ENCODE measurements at regions of chr18 and their contacts with region 1.

Region 1: DNA sequence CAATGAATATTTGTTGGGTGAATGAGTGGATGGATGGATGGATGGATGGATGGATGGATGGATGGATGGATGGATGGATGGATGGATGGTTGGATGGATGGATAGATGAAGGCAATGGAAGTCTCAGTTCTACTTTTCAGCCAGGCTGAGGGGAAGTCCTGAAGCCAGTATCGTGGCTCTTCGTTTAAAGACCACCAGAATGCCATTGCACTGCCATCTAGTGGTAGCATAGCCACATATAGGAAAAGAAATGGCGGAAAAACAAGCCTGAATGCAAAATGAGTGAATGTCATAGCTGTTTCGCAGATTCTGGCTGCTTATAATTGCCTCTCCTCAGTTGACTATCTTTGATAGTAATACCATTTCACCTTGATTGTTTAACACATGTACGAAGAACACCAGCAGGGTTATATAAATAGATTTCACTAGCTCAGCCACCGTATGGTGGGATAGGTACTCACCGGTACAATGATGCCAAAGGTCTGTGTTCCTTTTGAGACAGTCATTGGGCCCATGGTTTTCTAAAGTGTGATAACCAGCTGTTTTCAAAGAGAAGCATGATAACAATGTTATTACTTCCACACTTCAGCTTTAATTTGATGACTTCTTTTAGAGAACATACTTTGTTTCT is 62.3 kb upstream of the GREB1L start:
- DNase-seq: peak in 1 of 3 donors; percentile 77
- ATAC-seq: peak; percentile 72
- H3K4me3 ChIP-seq: no peak overlapping the region
- H3K4me1 ChIP-seq: no peaks in the 10 kb centered on the region
- CTCF ChIP-seq: peak; percentile 28

Region 2: DNA sequence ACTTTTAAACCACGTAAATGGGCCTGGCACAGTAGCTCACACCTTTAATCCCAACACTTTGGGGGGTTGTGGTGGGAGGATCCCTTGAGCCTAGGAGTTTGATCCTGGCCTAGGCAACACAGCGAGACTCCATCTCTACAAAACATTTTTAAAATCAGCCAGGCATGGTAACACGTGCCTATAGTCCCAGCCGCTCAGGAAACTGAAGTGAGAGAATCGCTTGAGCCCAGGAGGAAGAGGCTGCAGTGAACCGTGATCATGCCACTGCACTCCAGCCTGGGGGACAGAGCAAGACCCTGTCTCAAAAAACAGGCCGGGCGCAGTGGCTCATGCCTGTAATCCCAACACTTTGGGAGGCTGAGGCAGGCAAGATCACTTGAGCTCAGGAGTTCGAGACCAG is 80.3 kb before region 1 on chr18:
- intact Hi-C with region 1: no loop called
- DNase-seq: no peak
- ATAC-seq: no peak
- H3K4me3 ChIP-seq: no peak overlapping the region
- H3K4me1 ChIP-seq: peaks cover 3% of the 10 kb centered on the region
- CTCF ChIP-seq: no peak

Region 3: GRCh38 chr18:21129566-21130216 is 50.0 kb before region 1 on chr18:
- intact Hi-C with region 1: loop called in 1 of 2 experiments (anchors 10 kb)
- DNase-seq: no peak
- ATAC-seq: no peak
- H3K4me3 ChIP-seq: no peak overlapping the region
- H3K4me1 ChIP-seq: no peaks in the 10 kb centered on the region
- CTCF ChIP-seq: no peak

Region 4: GRCh38 chr18:21444465-21445023 is 264.8 kb after region 1 on chr18:
- intact Hi-C with region 1: loop called in 1 of 2 experiments (anchors 10 kb)
- DNase-seq: peak in 1 of 3 donors; percentile 61
- ATAC-seq: peak; percentile 32
- H3K4me3 ChIP-seq: no peak overlapping the region
- H3K4me1 ChIP-seq: no peaks in the 10 kb centered on the region
- CTCF ChIP-seq: peak; percentile 25